Heart right ventricle (tissue), 16 donors: ENCODE measurements at regions of chr10 and their contacts with region 1.

Region 1: GRCh38 chr10:79195091-79195923 is 126.5 kb downstream of the ZMIZ1 start:
- DNase-seq: peak; percentile 86 to 87
- ATAC-seq: peak; percentile 76 to 92 (median 86)
- H3K4me3 ChIP-seq: peak overlapping the region in 1 of 10 donors; percentile 19
- H3K27ac ChIP-seq: peak overlapping the region; percentile 45 to 85 (median 66)
- H3K4me1 ChIP-seq: peaks cover 39 to 69% (median 50%) of the 10 kb centered on the region in 9 donors
- H3K27me3 ChIP-seq: no peaks in the 10 kb centered on the region
- CTCF ChIP-seq: peak; percentile 96 to 98 (median 97)

Region 2: DNA sequence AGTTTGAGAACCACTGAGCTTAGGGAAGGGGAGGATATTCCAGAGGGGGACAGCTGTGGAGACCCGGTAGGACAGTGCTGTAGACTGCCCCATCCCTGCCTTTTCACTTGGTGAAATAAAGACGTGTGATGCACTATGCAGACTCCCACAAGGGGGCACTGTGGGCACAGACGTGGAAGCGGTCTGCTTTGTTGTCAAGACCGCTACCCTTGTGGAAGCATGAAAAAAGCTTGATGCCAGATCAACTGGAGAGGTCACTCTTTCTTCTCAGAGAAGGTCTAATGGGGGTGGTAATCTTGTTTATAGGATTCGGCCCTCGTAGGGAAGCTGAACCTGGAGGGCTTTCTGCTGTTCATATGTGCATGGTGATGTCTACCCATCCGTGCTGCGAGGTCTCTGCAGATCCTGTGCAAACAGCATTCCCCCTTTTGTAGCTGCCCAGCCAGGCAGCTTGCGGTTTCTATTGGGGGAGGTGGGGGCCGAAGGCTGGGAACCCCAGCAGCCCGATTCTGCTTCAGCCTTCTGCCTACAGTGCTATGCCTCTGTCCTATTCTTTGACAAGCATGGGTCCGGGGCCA is 1147.9 kb before region 1 on chr10:
- intact Hi-C with region 1: loop called in 9 of 10 experiments (anchors 1 to 10 kb)
- DNase-seq: peak; percentile 85 to 87
- ATAC-seq: peak; percentile 72 to 91 (median 87)
- H3K4me3 ChIP-seq: no peak overlapping the region
- H3K27ac ChIP-seq: no peak overlapping the region
- H3K4me1 ChIP-seq: peaks cover 0 to 19% (median 12%) of the 10 kb centered on the region in 9 donors
- H3K27me3 ChIP-seq: no peaks in the 10 kb centered on the region
- CTCF ChIP-seq: peak; percentile 80 to 93 (median 90)

Region 3: GRCh38 chr10:78302989-78303854 is 892.1 kb before region 1 on chr10:
- intact Hi-C with region 1: loop called in 5 of 10 experiments (anchors 2 to 10 kb)
- DNase-seq: peak; percentile 93 to 97
- ATAC-seq: peak; percentile 94 to 99 (median 97)
- H3K4me3 ChIP-seq: peak overlapping the region; percentile 33 to 70 (median 59)
- H3K27ac ChIP-seq: peak overlapping the region; percentile 68 to 97 (median 88)
- H3K4me1 ChIP-seq: peaks cover 3 to 28% (median 11%) of the 10 kb centered on the region in 9 donors
- H3K27me3 ChIP-seq: no peaks in the 10 kb centered on the region
- CTCF ChIP-seq: peak; percentile 60 to 78 (median 71)

Region 4: GRCh38 chr10:78688901-78689583 is 506.3 kb before region 1 on chr10:
- intact Hi-C with region 1: loop called in 1 of 10 experiments (anchors 5 kb)
- DNase-seq: peak in 1 of 2 donors; percentile 12
- ATAC-seq: peak in 6 of 8 donors; percentile 14 to 88 (median 30)
- H3K4me3 ChIP-seq: no peak overlapping the region
- H3K27ac ChIP-seq: no peak overlapping the region
- H3K4me1 ChIP-seq: peaks cover 0 to 5% (median 0%) of the 10 kb centered on the region in 9 donors
- H3K27me3 ChIP-seq: no peaks in the 10 kb centered on the region
- CTCF ChIP-seq: no peak

Region 5: GRCh38 chr10:78852466-78853240 is 342.7 kb before region 1 on chr10:
- intact Hi-C with region 1: loop called in 6 of 10 experiments (anchors 5 to 10 kb)
- DNase-seq: no peak
- ATAC-seq: no peak
- H3K4me3 ChIP-seq: no peak overlapping the region
- H3K27ac ChIP-seq: no peak overlapping the region
- H3K4me1 ChIP-seq: peaks cover 2 to 18% (median 7%) of the 10 kb centered on the region in 9 donors
- H3K27me3 ChIP-seq: no peaks in the 10 kb centered on the region
- CTCF ChIP-seq: peak in 7 of 9 donors; percentile 25 to 49 (median 41)

Region 6: GRCh38 chr10:78960316-78960800 is 234.9 kb before region 1 on chr10:
- intact Hi-C with region 1: loop called in 1 of 10 experiments (anchors 10 kb)
- DNase-seq: peak; percentile 45 to 86
- ATAC-seq: peak in 7 of 8 donors; percentile 43 to 75 (median 61)
- H3K4me3 ChIP-seq: no peak overlapping the region
- H3K27ac ChIP-seq: peak overlapping the region in 2 of 10 donors; percentile 6 to 43
- H3K4me1 ChIP-seq: peaks cover 14 to 45% (median 26%) of the 10 kb centered on the region in 9 donors
- H3K27me3 ChIP-seq: no peaks in the 10 kb centered on the region
- CTCF ChIP-seq: no peak

Region 7: DNA sequence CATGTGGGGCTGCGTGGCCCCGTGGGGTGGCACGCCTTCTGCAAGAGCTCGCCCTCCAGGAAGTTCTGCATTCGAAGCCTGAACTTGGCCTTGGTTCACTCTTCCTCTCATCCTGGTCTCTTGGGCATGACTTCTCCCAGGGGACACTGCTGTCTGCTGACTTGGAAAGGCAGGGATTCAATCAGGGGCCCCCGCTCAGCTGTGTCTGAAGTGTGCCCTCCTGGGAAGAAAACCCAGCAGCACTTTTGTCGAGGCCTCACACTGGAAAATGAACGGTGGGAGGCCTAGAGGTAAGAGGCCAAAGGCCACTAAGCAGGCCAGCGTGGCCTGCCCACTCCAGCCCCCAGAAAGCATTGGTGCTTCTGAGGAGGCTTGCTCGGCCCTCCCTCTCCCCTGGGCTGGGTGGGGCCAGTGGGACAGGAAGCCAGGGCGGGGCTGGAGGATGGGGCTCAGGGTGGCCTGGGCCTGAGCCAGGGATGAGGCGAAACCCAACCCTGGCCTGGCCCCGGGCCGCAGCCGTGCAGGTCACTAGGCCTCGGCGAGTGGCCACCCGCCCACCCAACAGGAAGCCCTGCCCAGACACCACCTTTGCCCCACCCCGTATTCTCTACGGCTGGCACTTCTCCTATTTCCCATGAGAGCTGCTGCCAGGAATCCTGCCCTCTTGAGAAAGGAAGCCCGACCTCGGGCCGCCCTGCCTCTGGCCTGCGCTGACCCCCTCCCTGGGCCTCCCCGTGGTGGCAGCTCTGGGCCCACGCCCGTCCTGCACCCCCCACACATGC is 45.5 kb before region 1 on chr10:
- intact Hi-C with region 1: loop called in 6 of 10 experiments (anchors 5 kb)
- DNase-seq: peak; percentile 86 to 90
- ATAC-seq: peak; percentile 54 to 74 (median 66)
- H3K4me3 ChIP-seq: peak overlapping the region in 2 of 10 donors; percentile 1 to 2
- H3K27ac ChIP-seq: peak overlapping the region; percentile 88 to 98 (median 93)
- H3K4me1 ChIP-seq: peaks cover 90 to 100% (median 100%) of the 10 kb centered on the region in 9 donors
- H3K27me3 ChIP-seq: no peaks in the 10 kb centered on the region
- CTCF ChIP-seq: no peak

Region 8: GRCh38 chr10:79445141-79445976 is 250.1 kb after region 1 on chr10 and contains the start of gene ZCCHC24:
- intact Hi-C with region 1: no loop called
- DNase-seq: peak; percentile 99
- ATAC-seq: peak; percentile 93 to 96 (median 95)
- H3K4me3 ChIP-seq: peak within 1 kb of the TSS; percentile 85 to 99 (median 96)
- H3K27ac ChIP-seq: peak within 1 kb of the TSS; percentile 92 to 99 (median 97)
- H3K4me1 ChIP-seq: peaks cover 16 to 51% (median 45%) of the 10 kb centered on the region in 9 donors
- H3K27me3 ChIP-seq: no peaks in the 10 kb centered on the region
- CTCF ChIP-seq: no peak
- total RNA-seq, gene ZCCHC24: 32.0 to 59.0 (median 49.0) TPM